ENCODE measurements at regions of chr6 and their contacts with region 1.

Region 1: GRCh38 chr6:142146828-142147662 is at the starts of genes NMBR and VTA1:
- DNase-seq: peak; percentile 98
- ATAC-seq: peak; percentile 99
- total RNA-seq, gene NMBR: not detected
- total RNA-seq, gene VTA1: 38.4 TPM

Region 2: GRCh38 chr6:142207265-142207877 is 60.3 kb after region 1 on chr6:
- intact Hi-C with region 1: loop called (anchors 2 kb)
- DNase-seq: no peak
- ATAC-seq: peak; percentile 62

Region 3: DNA sequence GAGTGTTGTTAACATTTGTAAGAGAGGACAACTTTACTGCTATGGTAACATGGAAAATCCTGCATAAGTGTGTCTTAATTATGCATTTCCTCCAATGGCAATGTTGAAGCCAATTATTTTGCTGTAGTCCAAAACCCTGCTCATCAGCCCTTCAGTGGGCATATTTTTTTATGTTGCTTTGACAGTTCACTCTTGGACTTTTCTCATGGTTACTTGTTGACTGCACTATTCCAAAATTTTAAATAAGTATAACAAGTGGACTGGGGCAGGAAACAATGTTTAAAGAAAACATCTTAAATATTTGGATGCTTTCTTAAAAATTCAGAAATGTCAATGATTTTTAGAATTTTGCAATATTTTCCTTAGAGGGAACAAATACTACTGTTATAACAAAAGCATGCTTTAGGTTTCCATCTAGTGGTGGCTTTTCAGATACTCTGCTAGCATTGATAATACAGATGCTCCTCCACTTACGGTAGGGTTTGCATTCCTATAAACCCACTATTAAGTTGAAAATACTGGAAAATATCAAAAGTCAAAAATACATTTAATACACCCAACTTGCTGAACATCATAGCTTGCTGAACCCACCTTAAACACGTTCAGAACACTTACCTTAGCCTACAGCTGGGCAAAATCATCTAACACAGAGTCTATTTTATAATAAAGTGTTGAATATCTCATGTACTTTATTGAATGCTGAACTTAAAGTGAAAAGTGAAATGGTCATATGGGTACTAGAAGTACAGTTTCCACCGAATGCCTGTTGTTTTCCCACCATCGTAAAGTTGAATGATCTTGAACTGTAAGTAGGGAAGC is 241.2 kb after region 1 on chr6:
- intact Hi-C with region 1: loop called (anchors 5 kb)
- DNase-seq: no peak
- ATAC-seq: no peak